ENCODE measurements at regions of chr4 and their contacts with region 1.

Region 1: GRCh38 chr4:167688660-167689142 is 403.6 kb upstream of the ANXA10 start:
- DNase-seq: no peak
- H3K4me3 ChIP-seq: no peak overlapping the region
- H3K27ac ChIP-seq: no peak overlapping the region
- H3K4me1 ChIP-seq: no peaks in the 10 kb centered on the region
- H3K27me3 ChIP-seq: no peaks in the 10 kb centered on the region
- CTCF ChIP-seq: no peak
- EP300 ChIP-seq: no peak
- POLR2A ChIP-seq: no peak

Region 2: GRCh38 chr4:167614866-167615265 is 73.8 kb before region 1 on chr4:
- intact Hi-C with region 1: no loop called
- DNase-seq: no peak
- H3K4me3 ChIP-seq: no peak overlapping the region
- H3K27ac ChIP-seq: no peak overlapping the region
- H3K4me1 ChIP-seq: no peaks in the 10 kb centered on the region
- H3K27me3 ChIP-seq: no peaks in the 10 kb centered on the region
- CTCF ChIP-seq: no peak
- EP300 ChIP-seq: no peak
- POLR2A ChIP-seq: no peak

Region 3: GRCh38 chr4:167702391-167702790 is 13.7 kb after region 1 on chr4:
- intact Hi-C with region 1: loop called in 1 of 4 experiments (anchors 1 kb)
- DNase-seq: no peak
- H3K4me3 ChIP-seq: no peak overlapping the region
- H3K27ac ChIP-seq: no peak overlapping the region
- H3K4me1 ChIP-seq: no peaks in the 10 kb centered on the region
- H3K27me3 ChIP-seq: no peaks in the 10 kb centered on the region
- CTCF ChIP-seq: no peak
- EP300 ChIP-seq: no peak
- POLR2A ChIP-seq: no peak

Region 4: DNA sequence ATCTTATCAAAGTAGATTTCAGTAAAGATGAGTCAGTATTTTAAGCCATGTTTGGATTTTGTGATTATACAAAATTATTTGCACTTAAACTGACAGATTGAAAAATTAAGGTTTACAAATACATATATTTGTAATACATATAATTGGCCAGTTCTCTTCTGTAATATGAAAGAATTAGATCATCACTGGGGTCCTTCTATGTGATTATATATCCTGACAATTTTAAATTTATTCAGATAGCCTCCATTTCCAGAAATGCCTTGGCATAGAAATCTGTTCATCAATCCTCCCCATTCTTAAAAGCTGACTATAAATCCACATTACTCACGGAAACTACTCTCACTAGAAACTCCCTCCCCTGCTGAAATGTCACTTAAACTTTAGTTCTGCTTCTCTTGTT is 123.3 kb after region 1 on chr4:
- intact Hi-C with region 1: no loop called
- DNase-seq: no peak
- H3K4me3 ChIP-seq: no peak overlapping the region
- H3K27ac ChIP-seq: no peak overlapping the region
- H3K4me1 ChIP-seq: no peaks in the 10 kb centered on the region
- H3K27me3 ChIP-seq: no peaks in the 10 kb centered on the region
- CTCF ChIP-seq: no peak
- EP300 ChIP-seq: no peak
- POLR2A ChIP-seq: no peak

Region 5: DNA sequence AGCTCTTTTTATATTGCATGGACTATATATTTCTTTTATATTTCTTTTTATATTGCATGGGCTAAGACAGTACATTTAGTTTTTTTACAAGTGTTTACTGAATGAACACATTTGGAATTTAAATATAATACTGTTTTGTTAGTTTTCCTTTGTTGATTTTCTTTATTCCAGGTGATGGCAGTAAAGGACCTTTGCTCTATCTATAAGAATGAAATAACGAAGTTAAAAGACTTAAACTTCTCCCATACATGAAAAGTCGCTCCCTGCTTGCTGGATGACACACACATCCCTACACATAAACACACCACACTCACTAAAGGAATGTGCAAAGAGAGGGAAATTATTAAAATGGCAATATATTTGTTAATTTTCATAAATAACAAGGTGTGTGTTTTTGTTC is 301.1 kb after region 1 on chr4:
- intact Hi-C with region 1: no loop called
- DNase-seq: no peak
- H3K4me3 ChIP-seq: no peak overlapping the region
- H3K27ac ChIP-seq: no peak overlapping the region
- H3K4me1 ChIP-seq: no peaks in the 10 kb centered on the region
- H3K27me3 ChIP-seq: no peaks in the 10 kb centered on the region
- CTCF ChIP-seq: no peak
- EP300 ChIP-seq: no peak
- POLR2A ChIP-seq: no peak